GM13976 (cell line): ENCODE measurements at regions of chr13 and their contacts with region 1.

Region 1: GRCh38 chr13:20174656-20175405 is 14.0 kb upstream of the GJA3 start:
- DNase-seq: peak; percentile 72
- CTCF ChIP-seq: no peak

Region 2: GRCh38 chr13:19581675-19582074 is 593.2 kb before region 1 on chr13:
- in situ Hi-C with region 1: no loop called
- DNase-seq: no peak
- CTCF ChIP-seq: no peak

Region 3: GRCh38 chr13:19726611-19727010 is 448.2 kb before region 1 on chr13:
- in situ Hi-C with region 1: loop called (anchors 25 kb)
- DNase-seq: no peak
- CTCF ChIP-seq: no peak

Region 4: GRCh38 chr13:19984430-19985218 is 190.2 kb before region 1 on chr13:
- in situ Hi-C with region 1: loop called (anchors 25 kb)
- DNase-seq: peak; percentile 66
- CTCF ChIP-seq: peak; percentile 41

Region 5: DNA sequence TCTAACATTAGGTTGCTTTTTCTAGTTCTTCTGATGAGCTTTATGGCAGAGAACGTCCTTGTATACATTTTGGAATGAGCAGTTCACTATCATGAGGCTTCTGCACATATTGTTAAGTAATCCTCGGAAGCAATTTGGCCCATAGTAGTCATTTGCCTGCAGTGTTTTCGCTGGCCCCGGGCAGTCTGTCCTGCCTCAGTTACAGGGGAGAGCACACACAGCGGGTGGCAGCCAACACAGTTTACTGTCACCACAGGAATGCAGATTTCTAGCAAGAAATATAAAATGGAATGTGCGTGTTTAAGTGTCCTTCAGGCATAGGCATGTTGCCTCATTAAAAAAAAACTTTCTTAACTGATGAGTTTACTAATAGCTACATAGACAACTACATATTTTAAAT is 128.8 kb after region 1 on chr13:
- in situ Hi-C with region 1: no loop called
- DNase-seq: no peak
- CTCF ChIP-seq: no peak

Region 6: GRCh38 chr13:20369886-20370361 is 195.1 kb after region 1 on chr13:
- in situ Hi-C with region 1: no loop called
- DNase-seq: no peak
- CTCF ChIP-seq: no peak